ENCODE measurements at regions of chr17 and their contacts with region 1.

Region 1: DNA sequence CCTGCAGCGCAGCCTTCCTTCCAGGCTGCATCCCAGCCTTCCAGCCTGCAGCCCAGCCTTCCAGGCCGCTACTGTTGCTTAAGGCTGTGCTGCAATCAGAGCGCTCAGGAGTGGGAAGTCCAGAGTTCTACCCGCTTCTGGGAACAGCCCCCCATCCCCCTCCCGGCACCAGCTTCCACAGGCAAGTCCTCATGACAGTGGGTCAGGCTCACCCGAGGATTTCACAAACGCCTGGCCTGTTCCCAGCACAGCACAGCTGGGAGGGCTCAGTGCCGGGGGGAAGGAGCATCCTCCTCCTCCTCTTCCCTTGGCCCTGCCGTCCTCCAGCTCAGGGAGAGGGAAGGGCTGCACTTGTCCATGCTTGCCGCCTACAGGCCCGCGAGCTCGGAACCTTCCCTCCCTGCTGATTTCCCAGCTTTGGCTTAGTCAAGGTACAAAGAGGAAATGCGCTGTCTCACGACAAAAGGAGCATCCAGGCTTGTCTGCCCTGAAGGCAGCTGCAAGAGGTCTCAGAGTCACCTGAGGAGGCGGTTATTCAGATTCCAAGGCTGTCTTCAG is 8.3 kb downstream of the SOCS3 start:
- DNase-seq: peak; percentile 98
- ATAC-seq: peak; percentile 54
- H3K4me3 ChIP-seq: no peak overlapping the region
- H3K27ac ChIP-seq: peak overlapping the region; percentile 81
- H3K4me1 ChIP-seq: peaks cover 31% of the 10 kb centered on the region
- H3K27me3 ChIP-seq: no peaks in the 10 kb centered on the region
- CTCF ChIP-seq: 0 out of 2 replicates have a peak, but pooled peaks have one; percentile 21
- POLR2A ChIP-seq: no peak; the same call in 1 of the 2 replicates
- RAD21 ChIP-seq: peak; percentile 31

Region 2: GRCh38 chr17:78903101-78903779 is 551.7 kb after region 1 on chr17 and contains the start of gene CEP295NL:
- CTCF ChIA-PET with region 1: no interaction called
- POLR2A ChIA-PET with region 1: interaction called, 22 read pairs
- dilution Hi-C with region 1: no loop called
- in situ Hi-C with region 1: no loop called
- intact Hi-C with region 1: no loop called
- DNase-seq: peak; percentile 63
- ATAC-seq: peak; percentile 13; the same call in 1 of the 2 replicates
- H3K4me3 ChIP-seq: no peak within 1 kb of the TSS
- H3K27ac ChIP-seq: no peak within 1 kb of the TSS
- H3K4me1 ChIP-seq: peaks cover 17% of the 10 kb centered on the region
- H3K27me3 ChIP-seq: no peaks in the 10 kb centered on the region
- CTCF ChIP-seq: no peak
- POLR2A ChIP-seq: no peak
- RAD21 ChIP-seq: no peak
- total RNA-seq, gene CEP295NL: 0.56 and 0.72 TPM in 2 replicates